Ovary (tissue), 10 donors: ENCODE measurements at regions of chr5 and their contacts with region 1.

Region 1: GRCh38 chr5:68661237-68661636 is 432.6 kb upstream of the SLC30A5 start:
- DNase-seq: no peak
- H3K4me3 ChIP-seq: no peak overlapping the region
- H3K27ac ChIP-seq: no peak overlapping the region
- H3K4me1 ChIP-seq: no peaks in the 10 kb centered on the region
- H3K27me3 ChIP-seq: no peaks in the 10 kb centered on the region
- CTCF ChIP-seq: no peak
- EP300 ChIP-seq: no peak
- POLR2A ChIP-seq: no peak

Region 2: GRCh38 chr5:67182301-67182790 is 1478.9 kb before region 1 on chr5:
- intact Hi-C with region 1: loop called in 1 of 4 experiments (anchors 5 kb)
- DNase-seq: peak; percentile 37 to 70 (median 61)
- H3K4me3 ChIP-seq: no peak overlapping the region
- H3K27ac ChIP-seq: peak overlapping the region in 1 of 2 donors; percentile 13
- H3K4me1 ChIP-seq: no peaks in the 10 kb centered on the region
- H3K27me3 ChIP-seq: no peaks in the 10 kb centered on the region
- CTCF ChIP-seq: no peak
- EP300 ChIP-seq: no peak
- POLR2A ChIP-seq: no peak